Activated naive CD4-positive, alpha-beta T cell treated with anti-CD3 and anti-CD28 coated beads for 36 hours (primary cell): ENCODE measurements at regions of chr12 and their contacts with region 1.

Region 1: GRCh38 chr12:66776974-66777373 is 98.1 kb upstream of the GRIP1 start:
- DNase-seq: peak; percentile 72
- H3K4me3 Mint-ChIP-seq: no peak overlapping the region
- H3K27ac Mint-ChIP-seq: peak overlapping the region; percentile 10
- H3K4me1 Mint-ChIP-seq: peaks cover 15% of the 10 kb centered on the region
- H3K27me3 Mint-ChIP-seq: no peaks in the 10 kb centered on the region

Region 2: DNA sequence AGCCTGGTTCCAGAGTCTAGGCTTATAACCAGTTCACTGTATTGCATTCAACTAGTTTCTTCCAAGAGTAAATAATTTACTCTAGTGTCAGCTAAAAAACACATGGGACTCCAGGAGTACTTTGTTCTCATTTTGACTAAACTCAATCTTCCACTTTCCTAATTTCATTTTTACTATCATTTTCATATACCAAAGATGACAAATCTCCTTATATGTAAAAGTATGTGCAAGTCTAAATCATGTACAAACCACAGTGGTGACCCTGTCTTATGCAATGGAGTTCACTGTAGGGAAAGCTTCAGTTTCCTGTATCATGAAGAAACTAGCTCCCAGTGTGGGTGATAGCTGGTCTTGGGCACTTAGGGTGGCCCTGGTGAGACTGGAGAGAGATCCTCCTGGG is 323.1 kb before region 1 on chr12:
- CTCF ChIA-PET with region 1: no interaction called
- intact Hi-C with region 1: no loop called
- DNase-seq: peak; percentile 13
- H3K4me3 Mint-ChIP-seq: no peak overlapping the region
- H3K27ac Mint-ChIP-seq: no peak overlapping the region
- H3K4me1 Mint-ChIP-seq: peaks cover 8% of the 10 kb centered on the region
- H3K27me3 Mint-ChIP-seq: no peaks in the 10 kb centered on the region

Region 3: GRCh38 chr12:66733839-66734238 is 43.1 kb before region 1 on chr12:
- CTCF ChIA-PET with region 1: no interaction called
- intact Hi-C with region 1: loop called (anchors 2 kb)
- DNase-seq: no peak
- H3K4me3 Mint-ChIP-seq: no peak overlapping the region
- H3K27ac Mint-ChIP-seq: no peak overlapping the region
- H3K4me1 Mint-ChIP-seq: peaks cover 17% of the 10 kb centered on the region
- H3K27me3 Mint-ChIP-seq: no peaks in the 10 kb centered on the region

Region 4: GRCh38 chr12:66829660-66830325 is 52.8 kb after region 1 on chr12:
- CTCF ChIA-PET with region 1: no interaction called
- intact Hi-C with region 1: loop called (anchors 5 kb)
- DNase-seq: peak; percentile 49
- H3K4me3 Mint-ChIP-seq: no peak overlapping the region
- H3K27ac Mint-ChIP-seq: peak overlapping the region; percentile 34
- H3K4me1 Mint-ChIP-seq: peaks cover 41% of the 10 kb centered on the region
- H3K27me3 Mint-ChIP-seq: no peaks in the 10 kb centered on the region